CD8-positive, alpha-beta memory T cell (primary cell): ENCODE measurements at regions of chr5 and their contacts with region 1.

Region 1: DNA sequence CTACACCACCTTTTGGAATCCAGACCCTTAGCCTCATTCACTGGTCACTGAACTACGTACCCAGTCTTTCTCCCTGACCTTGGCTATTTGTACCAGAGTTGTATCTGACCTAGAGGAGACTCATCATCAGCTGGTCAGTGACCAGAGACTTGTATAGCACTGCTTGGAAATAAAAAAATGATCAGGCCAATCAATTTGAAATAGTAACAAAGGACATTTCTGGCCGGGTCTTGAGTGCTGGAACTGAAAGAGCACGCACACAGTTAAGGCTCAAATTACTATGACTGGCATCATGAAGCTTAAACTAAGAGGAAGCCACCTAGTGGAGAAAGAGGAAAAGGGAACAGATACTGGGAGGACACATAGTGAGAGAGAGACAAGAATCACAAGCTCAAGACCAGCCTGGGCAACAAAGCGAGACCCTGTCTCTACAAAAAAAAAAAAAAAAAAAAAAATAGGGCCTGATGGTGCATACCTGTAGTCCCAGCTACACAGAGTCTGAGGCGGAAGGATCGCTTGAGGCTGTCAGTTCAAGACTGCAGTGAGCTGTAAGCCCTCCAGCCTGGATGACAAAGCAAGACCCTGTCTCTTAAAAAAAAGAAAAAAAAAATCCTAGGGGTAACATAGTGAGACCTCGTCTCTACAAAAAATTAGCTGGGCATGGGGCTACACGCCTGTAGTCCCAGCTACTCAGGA is 12.8 kb upstream of the SRP19 start:
- DNase-seq: peak in 2 of 5 donors; percentile 29 to 32
- H3K4me3 ChIP-seq: no peak overlapping the region
- H3K4me3 Mint-ChIP-seq: peak overlapping the region in 1 of 7 donors; percentile 41
- H3K27ac ChIP-seq: no peak overlapping the region
- H3K27ac Mint-ChIP-seq: peak overlapping the region in 3 of 8 donors; percentile 2 to 74 (median 30)
- H3K4me1 ChIP-seq: no peaks in the 10 kb centered on the region
- H3K4me1 Mint-ChIP-seq: peaks cover 5% of the 10 kb centered on the region in 3 donors
- H3K27me3 ChIP-seq: no peaks in the 10 kb centered on the region
- H3K27me3 Mint-ChIP-seq: peaks cover 0 to 8% of the 10 kb centered on the region in 2 donors

Region 2: GRCh38 chr5:111735583-111736270 is 1112.5 kb before region 1 on chr5:
- CTCF ChIA-PET with region 1: no interaction called
- POLR2A ChIA-PET with region 1: no interaction called
- DNase-seq: no peak
- H3K4me3 ChIP-seq: no peak overlapping the region
- H3K4me3 Mint-ChIP-seq: no peak overlapping the region
- H3K27ac ChIP-seq: no peak overlapping the region
- H3K27ac Mint-ChIP-seq: peak overlapping the region in 1 of 8 donors; percentile 39
- H3K4me1 ChIP-seq: no peaks in the 10 kb centered on the region
- H3K4me1 Mint-ChIP-seq: peaks cover 0 to 1% (median 0%) of the 10 kb centered on the region in 3 donors
- H3K27me3 ChIP-seq: peaks cover 2% of the 10 kb centered on the region
- H3K27me3 Mint-ChIP-seq: peaks cover 2 to 3% of the 10 kb centered on the region in 2 donors

Region 3: GRCh38 chr5:112833971-112834370 is 14.3 kb before region 1 on chr5:
- CTCF ChIA-PET with region 1: interaction called, 10 read pairs
- POLR2A ChIA-PET with region 1: no interaction called
- DNase-seq: no peak
- H3K4me3 ChIP-seq: no peak overlapping the region
- H3K4me3 Mint-ChIP-seq: no peak overlapping the region
- H3K27ac ChIP-seq: no peak overlapping the region
- H3K27ac Mint-ChIP-seq: no peak overlapping the region
- H3K4me1 ChIP-seq: no peaks in the 10 kb centered on the region
- H3K4me1 Mint-ChIP-seq: no peaks in the 10 kb centered on the region
- H3K27me3 ChIP-seq: no peaks in the 10 kb centered on the region
- H3K27me3 Mint-ChIP-seq: no peaks in the 10 kb centered on the region

Region 4: GRCh38 chr5:112860929-112861637 is 12.8 kb after region 1 on chr5 and contains the start of gene SRP19:
- CTCF ChIA-PET with region 1: interaction called, 10 read pairs
- POLR2A ChIA-PET with region 1: interaction called, 3 read pairs
- DNase-seq: peak; percentile 85 to 94 (median 89)
- H3K4me3 ChIP-seq: peak within 1 kb of the TSS; percentile 96
- H3K4me3 Mint-ChIP-seq: peak within 1 kb of the TSS; percentile 93 to 97 (median 97)
- H3K27ac ChIP-seq: peak within 1 kb of the TSS; percentile 87
- H3K27ac Mint-ChIP-seq: peak within 1 kb of the TSS; percentile 90 to 99 (median 98)
- H3K4me1 ChIP-seq: peaks cover 27% of the 10 kb centered on the region
- H3K4me1 Mint-ChIP-seq: peaks cover 33 to 47% (median 36%) of the 10 kb centered on the region in 3 donors
- H3K27me3 ChIP-seq: no peaks in the 10 kb centered on the region
- H3K27me3 Mint-ChIP-seq: peaks cover 3 to 13% of the 10 kb centered on the region in 2 donors
- total RNA-seq, gene SRP19: 68.0 to 68.3 TPM

Region 5: DNA sequence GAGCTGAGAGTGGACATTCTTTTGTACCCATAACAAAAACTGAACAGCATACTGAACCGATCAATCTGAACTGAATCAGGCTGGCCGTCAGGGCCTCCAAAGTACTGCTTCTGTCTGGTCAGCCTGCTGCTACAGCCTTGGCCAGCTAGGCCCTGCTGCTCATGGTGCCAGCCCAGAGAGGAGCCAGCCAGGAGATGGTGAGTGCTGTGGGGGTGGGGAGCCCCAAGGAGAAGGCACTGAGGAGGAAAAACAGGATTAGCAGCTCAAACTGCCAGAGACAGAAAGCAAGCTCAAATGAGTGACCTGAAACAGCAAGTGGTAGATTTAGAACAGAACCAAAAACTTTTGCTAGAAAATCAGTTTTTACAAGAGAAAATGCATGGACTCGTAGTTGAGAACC is 36.7 kb after region 1 on chr5:
- CTCF ChIA-PET with region 1: no interaction called
- POLR2A ChIA-PET with region 1: no interaction called
- DNase-seq: no peak
- H3K4me3 ChIP-seq: no peak overlapping the region
- H3K4me3 Mint-ChIP-seq: no peak overlapping the region
- H3K27ac ChIP-seq: no peak overlapping the region
- H3K27ac Mint-ChIP-seq: peak overlapping the region in 6 of 8 donors; percentile 48 to 97 (median 58)
- H3K4me1 ChIP-seq: peaks cover 30% of the 10 kb centered on the region
- H3K4me1 Mint-ChIP-seq: peaks cover 41 to 43% (median 41%) of the 10 kb centered on the region in 3 donors
- H3K27me3 ChIP-seq: no peaks in the 10 kb centered on the region
- H3K27me3 Mint-ChIP-seq: no peaks in the 10 kb centered on the region